Activated CD8-positive, alpha-beta T cell treated with anti-CD3 and anti-CD28 coated beads for 36 hours (primary cell): ENCODE measurements at regions of chr18 and their contacts with region 1.

Region 1: DNA sequence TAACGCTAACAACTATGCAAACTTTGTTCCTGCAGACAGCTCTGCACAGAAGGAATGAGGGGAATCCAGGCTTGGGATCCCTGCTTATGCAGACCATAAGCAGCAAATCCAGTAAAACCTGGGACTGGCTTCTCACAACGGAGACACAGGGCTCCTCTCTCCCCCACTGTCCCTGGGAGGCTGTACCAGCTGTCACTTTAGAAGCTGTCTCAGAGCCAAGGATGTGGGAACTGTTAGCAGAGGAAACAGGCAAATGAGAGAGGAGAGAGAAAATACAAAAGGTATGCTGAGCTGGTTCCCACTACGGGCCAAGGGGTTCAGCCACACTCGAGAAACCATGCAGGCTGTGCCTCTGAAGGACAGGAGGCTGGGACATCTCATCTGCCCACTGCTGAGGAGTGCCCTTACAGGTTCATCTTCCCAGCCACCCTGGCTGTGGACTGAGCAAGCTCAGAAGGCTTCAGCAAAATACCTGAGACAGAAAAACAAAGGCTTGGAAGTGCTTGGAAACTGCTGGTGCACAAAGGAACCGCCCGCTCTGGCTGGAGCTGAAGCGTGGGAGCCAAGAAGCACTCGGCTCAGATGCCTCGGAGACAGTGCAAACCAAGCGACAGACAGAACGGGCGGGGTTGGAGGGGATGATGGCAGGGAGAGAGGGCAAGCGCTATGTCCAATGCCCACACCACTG is 72.5 kb downstream of the FAM210A start:
- DNase-seq: no peak
- ATAC-seq: no peak
- H3K4me3 Mint-ChIP-seq: no peak overlapping the region
- H3K27ac Mint-ChIP-seq: no peak overlapping the region
- H3K4me1 Mint-ChIP-seq: peaks cover 10% of the 10 kb centered on the region
- H3K27me3 Mint-ChIP-seq: no peaks in the 10 kb centered on the region
- CTCF ChIP-seq: no peak

Region 2: DNA sequence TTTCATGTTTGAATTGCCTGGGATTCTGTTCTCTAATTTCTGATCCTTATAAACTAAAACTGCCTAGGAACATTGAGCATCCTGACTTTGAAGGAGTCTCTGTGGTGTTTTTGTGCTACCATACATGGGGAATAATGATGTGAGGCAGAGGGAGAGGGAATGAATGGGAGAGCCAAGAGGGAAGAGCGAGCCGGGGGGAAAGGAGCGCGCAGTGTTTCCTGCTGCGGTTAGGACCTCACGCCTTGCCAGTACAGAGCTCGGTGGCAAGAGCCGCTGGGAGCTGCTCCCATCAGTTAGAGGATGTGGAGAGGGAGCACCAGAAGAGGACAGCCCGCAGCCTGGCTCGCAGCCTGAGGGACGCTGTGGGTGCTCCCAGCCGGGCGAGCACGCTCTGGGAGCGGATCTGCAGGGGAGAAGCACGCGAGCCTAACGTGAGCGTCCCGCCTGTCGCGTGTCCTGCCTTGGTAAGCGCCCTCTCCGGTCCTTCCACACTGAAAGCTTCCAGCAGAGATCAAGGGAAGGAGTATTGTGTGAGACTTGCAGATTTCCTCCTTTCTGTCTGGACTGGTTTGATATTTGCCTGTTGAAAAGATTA is 42.2 kb before region 1 on chr18:
- CTCF ChIA-PET with region 1: no interaction called
- POLR2A ChIA-PET with region 1: no interaction called
- intact Hi-C with region 1: no loop called
- DNase-seq: no peak
- ATAC-seq: no peak
- H3K4me3 Mint-ChIP-seq: peak overlapping the region; percentile 76
- H3K27ac Mint-ChIP-seq: peak overlapping the region; percentile 93
- H3K4me1 Mint-ChIP-seq: peaks cover 86% of the 10 kb centered on the region
- H3K27me3 Mint-ChIP-seq: no peaks in the 10 kb centered on the region
- CTCF ChIP-seq: no peak

Region 3: GRCh38 chr18:13800505-13801259 is 146.8 kb after region 1 on chr18:
- CTCF ChIA-PET with region 1: no interaction called
- POLR2A ChIA-PET with region 1: no interaction called
- intact Hi-C with region 1: loop called (anchors 10 kb)
- DNase-seq: peak; percentile 68
- ATAC-seq: peak; percentile 96
- H3K4me3 Mint-ChIP-seq: peak overlapping the region; percentile 15
- H3K27ac Mint-ChIP-seq: no peak overlapping the region
- H3K4me1 Mint-ChIP-seq: peaks cover 5% of the 10 kb centered on the region
- H3K27me3 Mint-ChIP-seq: peaks cover 41% of the 10 kb centered on the region
- CTCF ChIP-seq: peak; percentile 14